ENCODE measurements at regions of chr12 and their contacts with region 1.

Region 1: DNA sequence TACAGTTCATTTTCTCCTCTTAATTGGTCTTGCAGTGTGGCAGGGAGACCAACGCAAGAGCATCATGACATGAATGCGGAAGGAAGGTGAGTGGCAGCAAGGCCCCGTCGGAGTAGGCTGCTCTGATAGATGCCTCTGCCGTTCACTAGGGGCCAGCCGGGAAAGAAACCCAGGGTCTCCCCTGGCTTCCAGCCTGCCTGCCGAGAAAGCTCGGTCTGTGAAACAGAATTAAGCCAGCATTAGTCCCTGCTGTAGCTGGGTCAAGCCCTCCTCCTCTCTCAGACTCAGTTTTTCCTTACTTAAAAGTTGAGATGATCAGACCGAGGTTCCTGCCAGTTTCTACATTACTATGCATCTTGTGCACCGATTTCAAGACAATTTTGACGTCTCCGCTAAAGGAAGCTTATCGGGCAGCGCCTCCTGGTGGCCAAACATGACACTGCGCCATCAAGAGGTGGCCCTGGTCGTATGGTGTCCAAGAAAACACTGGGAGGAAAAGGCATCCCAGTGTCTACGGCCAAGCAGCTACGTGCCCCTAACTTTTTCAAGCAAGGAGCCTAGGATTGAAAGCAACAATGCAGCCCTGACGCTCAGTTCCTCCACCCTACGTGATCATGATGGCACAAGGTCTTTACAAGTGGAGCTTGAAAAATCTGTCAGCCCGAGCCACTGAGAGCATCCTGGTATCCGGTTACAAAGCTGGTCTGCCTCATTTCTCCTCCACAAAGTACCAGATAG is 131.6 kb downstream of the KSR2 start:
- DNase-seq: peak; percentile 67
- H3K27ac ChIP-seq: no peak overlapping the region
- CTCF ChIP-seq: peak; percentile 95

Region 2: GRCh38 chr12:116257215-116257614 is 1580.0 kb before region 1 on chr12:
- CTCF ChIA-PET with region 1: no interaction called
- POLR2A ChIA-PET with region 1: no interaction called
- DNase-seq: no peak
- H3K27ac ChIP-seq: no peak overlapping the region
- CTCF ChIP-seq: no peak

Region 3: GRCh38 chr12:117367011-117367638 is 470.0 kb before region 1 on chr12:
- CTCF ChIA-PET with region 1: interaction called, 35 read pairs
- POLR2A ChIA-PET with region 1: no interaction called
- DNase-seq: peak; percentile 76
- H3K27ac ChIP-seq: no peak overlapping the region
- CTCF ChIP-seq: peak; percentile 91

Region 4: DNA sequence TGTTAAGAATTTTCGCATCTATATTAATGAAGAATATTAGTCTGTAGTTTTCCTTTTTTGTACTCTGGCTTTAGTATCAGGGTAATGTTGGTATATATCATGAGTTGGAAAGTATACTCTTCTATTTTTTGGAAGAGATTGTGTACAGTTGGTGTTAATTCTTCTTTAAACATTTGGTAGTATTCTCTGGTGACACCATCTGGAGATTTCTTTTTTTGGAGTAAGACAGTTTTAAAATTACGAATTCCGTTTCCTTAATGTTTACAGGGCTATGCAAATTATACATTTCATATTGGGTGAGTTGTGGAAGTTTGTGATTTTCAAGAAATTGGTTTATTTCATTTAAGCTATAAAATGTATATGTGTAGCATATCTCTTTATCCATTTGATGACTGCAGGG is 292.0 kb before region 1 on chr12:
- CTCF ChIA-PET with region 1: no interaction called
- POLR2A ChIA-PET with region 1: no interaction called
- DNase-seq: no peak
- H3K27ac ChIP-seq: no peak overlapping the region
- CTCF ChIP-seq: no peak

Measured in RWPE1 (cell line).